ENCODE measurements at regions of chr17 and their contacts with region 1.

Region 1: DNA sequence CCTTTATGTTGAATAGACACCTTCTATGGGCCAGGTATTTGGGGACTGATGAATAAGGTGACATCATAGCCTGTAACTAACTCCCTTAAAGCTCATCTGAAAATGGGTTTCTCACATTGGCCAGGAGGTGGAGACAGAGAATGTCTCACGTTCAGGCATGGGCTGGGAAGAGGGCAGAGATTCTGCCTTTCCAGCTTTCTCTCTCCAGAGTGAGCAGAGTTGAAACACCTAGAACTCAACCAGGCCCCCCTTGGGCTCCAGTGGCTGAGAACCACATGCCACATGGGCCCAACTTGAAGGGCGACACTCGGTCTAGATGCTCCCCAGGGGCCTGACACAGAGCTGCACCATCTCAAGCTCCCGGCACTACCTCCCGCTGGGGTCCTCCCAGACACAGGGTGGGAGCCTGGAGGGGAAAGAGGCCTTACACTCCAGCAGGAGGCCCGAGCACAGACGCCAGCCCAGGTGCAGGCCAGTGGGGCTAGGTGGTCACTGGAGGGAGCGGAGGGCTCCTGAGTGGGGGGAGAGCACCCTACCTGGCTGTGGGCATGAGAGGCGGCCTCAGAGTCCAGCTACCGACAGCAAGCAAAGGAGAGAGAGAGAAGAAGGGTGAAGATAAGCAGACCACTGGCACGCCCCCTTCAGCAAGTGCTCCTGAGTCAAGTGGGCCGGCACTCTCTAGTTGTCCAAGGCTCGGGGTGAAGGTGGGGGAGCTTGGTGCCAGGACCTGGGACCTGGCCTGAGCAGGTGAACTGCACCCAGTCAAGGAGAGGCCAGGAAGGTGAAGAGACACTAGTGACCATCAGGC is 55.9 kb downstream of the MYO18A start:
- DNase-seq: peak; percentile 34
- H3K4me3 Mint-ChIP-seq: no peak overlapping the region
- H3K27ac Mint-ChIP-seq: no peak overlapping the region
- H3K4me1 Mint-ChIP-seq: no peaks in the 10 kb centered on the region
- H3K27me3 Mint-ChIP-seq: no peaks in the 10 kb centered on the region

Region 2: DNA sequence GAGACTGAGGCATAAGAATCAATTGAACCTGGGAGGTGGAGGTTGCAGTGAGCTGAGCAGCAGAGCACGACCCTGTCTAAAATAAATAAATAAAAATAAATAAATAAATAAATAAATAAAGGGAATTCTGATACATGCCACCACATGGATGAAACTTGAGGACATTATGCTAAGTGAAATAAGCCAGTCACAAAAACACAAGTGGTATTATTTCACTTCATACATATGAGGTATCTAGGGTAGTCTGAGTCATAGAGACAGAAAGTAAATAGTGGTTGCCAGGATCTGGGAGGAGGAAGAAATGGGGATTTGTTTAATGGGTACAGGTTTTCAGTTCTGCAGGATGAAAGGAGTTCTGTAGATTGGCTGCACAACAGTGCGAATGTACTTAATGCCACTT is 65.0 kb before region 1 on chr17:
- intact Hi-C with region 1: no loop called
- DNase-seq: no peak
- H3K4me3 Mint-ChIP-seq: no peak overlapping the region
- H3K27ac Mint-ChIP-seq: no peak overlapping the region
- H3K4me1 Mint-ChIP-seq: no peaks in the 10 kb centered on the region
- H3K27me3 Mint-ChIP-seq: peaks cover 3% of the 10 kb centered on the region

Region 3: GRCh38 chr17:29140051-29140621 is 15.8 kb after region 1 on chr17:
- intact Hi-C with region 1: loop called (anchors 1 kb)
- DNase-seq: peak; percentile 82
- H3K4me3 Mint-ChIP-seq: peak overlapping the region; percentile 96
- H3K27ac Mint-ChIP-seq: peak overlapping the region; percentile 100
- H3K4me1 Mint-ChIP-seq: peaks cover 80% of the 10 kb centered on the region
- H3K27me3 Mint-ChIP-seq: no peaks in the 10 kb centered on the region

Region 4: GRCh38 chr17:29155227-29155965 is 31.1 kb after region 1 on chr17:
- intact Hi-C with region 1: no loop called
- DNase-seq: peak; percentile 51
- H3K4me3 Mint-ChIP-seq: peak overlapping the region; percentile 63
- H3K27ac Mint-ChIP-seq: peak overlapping the region; percentile 87
- H3K4me1 Mint-ChIP-seq: peaks cover 60% of the 10 kb centered on the region
- H3K27me3 Mint-ChIP-seq: no peaks in the 10 kb centered on the region

Region 5: GRCh38 chr17:29219378-29220047 is 95.2 kb after region 1 on chr17:
- intact Hi-C with region 1: loop called (anchors 1 kb)
- DNase-seq: peak; percentile 55
- H3K4me3 Mint-ChIP-seq: no peak overlapping the region
- H3K27ac Mint-ChIP-seq: no peak overlapping the region
- H3K4me1 Mint-ChIP-seq: peaks cover 9% of the 10 kb centered on the region
- H3K27me3 Mint-ChIP-seq: peaks cover 4% of the 10 kb centered on the region